K562 (cell line): ENCODE measurements at regions of chr6 and their contacts with region 1.

Region 1: DNA sequence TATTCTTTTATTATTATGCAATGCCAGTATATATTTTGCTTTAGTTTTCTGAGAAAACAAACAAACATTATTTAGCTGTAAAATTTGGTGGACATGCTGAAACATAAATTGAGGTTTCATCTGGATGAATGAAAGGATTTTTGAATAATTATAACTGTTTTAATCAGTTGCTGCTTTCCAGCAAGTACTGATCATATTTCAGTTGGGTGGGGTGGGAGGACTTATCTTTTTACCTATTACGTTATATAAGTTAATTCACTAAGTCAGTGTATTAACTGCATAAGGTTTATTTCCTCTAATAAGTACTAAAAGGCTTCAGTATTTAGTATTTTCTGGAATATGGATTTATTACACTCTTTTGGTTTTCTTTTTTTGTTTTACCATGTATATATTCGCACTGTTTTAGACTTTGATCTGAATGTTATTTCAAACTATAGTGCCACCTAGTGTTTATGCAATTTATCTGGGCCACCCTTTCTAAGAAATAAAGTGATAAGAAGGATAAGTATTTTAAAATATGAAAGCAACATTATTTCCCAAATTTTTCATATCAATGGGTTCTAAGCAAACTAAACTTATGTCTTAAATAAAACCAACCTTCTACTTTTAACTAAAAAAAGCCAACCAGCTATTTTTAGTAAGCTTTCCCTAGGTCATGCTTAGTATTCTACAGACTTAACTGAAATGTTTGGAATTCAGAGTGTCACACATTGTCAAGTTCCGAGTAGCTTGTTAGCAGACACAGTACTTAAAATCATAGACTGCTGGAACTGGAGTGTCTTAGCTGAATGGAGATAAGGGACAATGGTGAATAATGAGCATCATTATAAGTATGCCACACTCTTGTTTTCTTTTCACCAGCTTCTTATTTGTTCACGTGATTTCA is 105.4 kb upstream of the MCHR2 start:
- DNase-seq: peak in 1 of 4 experiments; percentile 24
- ATAC-seq: peak; percentile 69; the same call in 2 of the 3 replicates
- H3K4me3 ChIP-seq: no peak overlapping the region
- H3K27ac ChIP-seq: no peak overlapping the region
- H3K4me1 ChIP-seq: no peaks in the 10 kb centered on the region
- H3K27me3 ChIP-seq: no peaks in the 10 kb centered on the region
- CTCF ChIP-seq: peak in 2 of 3 experiments; percentile 45 to 69; a peak in 3 of 6 replicates
- EP300 ChIP-seq: no peak
- POLR2A ChIP-seq: no peak
- RAD21 ChIP-seq: peak; percentile 47 to 66; a peak in 3 of 4 replicates

Region 2: GRCh38 chr6:99905209-99906106 is 194.0 kb before region 1 on chr6:
- CTCF ChIA-PET with region 1: no interaction called
- POLR2A ChIA-PET with region 1: no interaction called
- in situ Hi-C with region 1: no loop called
- intact Hi-C with region 1: loop called (anchors 1 kb)
- DNase-seq: peak; percentile 31 to 41 (median 32)
- ATAC-seq: peak; percentile 83
- H3K4me3 ChIP-seq: no peak overlapping the region
- H3K27ac ChIP-seq: no peak overlapping the region
- H3K4me1 ChIP-seq: no peaks in the 10 kb centered on the region
- H3K27me3 ChIP-seq: no peaks in the 10 kb centered on the region
- CTCF ChIP-seq: peak; percentile 65 to 95 (median 84)
- EP300 ChIP-seq: no peak
- POLR2A ChIP-seq: no peak
- RAD21 ChIP-seq: peak in 1 of 2 experiments; percentile 46; a peak in 2 of 4 replicates